ENCODE measurements at regions of chr11 and their contacts with region 1.

Region 1: GRCh38 chr11:119999220-119999619 is 138.7 kb downstream of the TRIM29 start:
- DNase-seq: no peak
- H3K4me3 ChIP-seq: no peak overlapping the region
- H3K27ac ChIP-seq: no peak overlapping the region
- H3K4me1 ChIP-seq: peaks cover 0 to 35% of the 10 kb centered on the region in 2 experiments; a peak in 2 of 4 replicates
- H3K27me3 ChIP-seq: peaks cover 5% of the 10 kb centered on the region; the same call in 1 of the 2 replicates
- CTCF ChIP-seq: peak; percentile 33
- EP300 ChIP-seq: no peak
- RAD21 ChIP-seq: no peak

Region 2: GRCh38 chr11:119942583-119943297 is 56.5 kb before region 1 on chr11:
- CTCF ChIA-PET with region 1: no interaction called
- POLR2A ChIA-PET with region 1: no interaction called
- DNase-seq: no peak
- H3K4me3 ChIP-seq: no peak overlapping the region
- H3K27ac ChIP-seq: no peak overlapping the region
- H3K4me1 ChIP-seq: no peaks in the 10 kb centered on the region; a peak in 1 of 4 replicates
- H3K27me3 ChIP-seq: no peaks in the 10 kb centered on the region
- CTCF ChIP-seq: no peak
- EP300 ChIP-seq: no peak
- RAD21 ChIP-seq: no peak

Region 3: DNA sequence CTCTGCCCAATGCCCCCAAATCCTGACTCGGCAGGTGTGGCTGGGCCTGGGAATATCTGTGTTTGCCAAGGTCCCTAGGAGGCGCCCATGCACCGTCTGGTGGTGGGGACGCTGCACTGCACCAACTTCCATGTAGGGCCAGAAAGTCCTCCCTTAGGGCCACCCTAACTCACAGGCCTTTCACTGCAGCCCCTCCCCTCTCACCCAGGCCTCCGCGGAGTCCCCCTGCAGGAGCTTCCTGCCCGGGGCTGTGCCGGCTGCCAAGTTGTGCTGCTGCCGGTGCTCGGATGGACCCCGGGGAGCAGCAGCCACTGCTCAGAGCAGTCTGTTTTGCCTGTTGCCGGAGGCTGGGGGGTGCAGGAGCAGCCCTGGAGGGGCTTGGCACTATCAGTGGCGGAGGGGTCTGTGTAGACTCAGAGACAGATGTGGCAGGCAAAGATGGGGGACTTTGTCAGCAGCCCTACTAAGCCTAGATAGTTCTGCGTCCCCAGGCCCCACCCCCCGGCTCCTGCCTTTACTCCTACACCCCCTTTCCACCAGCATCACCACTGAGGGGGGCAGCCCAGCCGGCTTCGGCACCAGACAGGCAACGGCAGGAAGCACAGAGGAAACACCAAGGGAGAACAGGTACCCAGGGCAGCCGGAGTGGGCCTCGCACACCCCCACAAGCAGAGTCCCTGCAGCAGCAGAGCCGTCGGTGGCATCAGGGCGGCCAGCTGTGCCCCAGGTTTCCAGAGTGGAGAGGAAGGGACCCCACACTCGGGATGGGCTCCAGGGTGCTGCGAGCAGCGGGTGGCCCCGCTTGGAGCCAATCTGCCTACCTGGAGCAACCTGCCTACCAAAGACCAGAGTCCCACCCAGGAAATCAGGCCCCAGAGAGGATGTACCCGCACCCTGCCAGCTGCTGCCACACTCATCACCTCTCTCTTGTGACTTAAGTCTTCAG is 14.4 kb after region 1 on chr11:
- CTCF ChIA-PET with region 1: interaction called, 16 read pairs
- POLR2A ChIA-PET with region 1: interaction called, 3 read pairs
- DNase-seq: peak; percentile 78
- H3K4me3 ChIP-seq: peak overlapping the region in 1 of 2 experiments; percentile 21; a peak in 1 of 4 replicates
- H3K27ac ChIP-seq: no peak overlapping the region; a peak in 1 of 4 replicates
- H3K4me1 ChIP-seq: peaks cover 0 to 43% of the 10 kb centered on the region in 2 experiments; a peak in 2 of 4 replicates
- H3K27me3 ChIP-seq: peaks cover 7% of the 10 kb centered on the region; the same call in 1 of the 2 replicates
- CTCF ChIP-seq: peak; percentile 54
- EP300 ChIP-seq: no peak
- RAD21 ChIP-seq: peak; percentile 71